ENCODE measurements at regions of chr17 and their contacts with region 1.

Region 1: GRCh38 chr17:50200457-50201275 is 765 bp downstream of the COL1A1 start:
- DNase-seq: no peak
- H3K4me3 ChIP-seq: peak overlapping the region; percentile 100
- CTCF ChIP-seq: peak; percentile 80

Region 2: DNA sequence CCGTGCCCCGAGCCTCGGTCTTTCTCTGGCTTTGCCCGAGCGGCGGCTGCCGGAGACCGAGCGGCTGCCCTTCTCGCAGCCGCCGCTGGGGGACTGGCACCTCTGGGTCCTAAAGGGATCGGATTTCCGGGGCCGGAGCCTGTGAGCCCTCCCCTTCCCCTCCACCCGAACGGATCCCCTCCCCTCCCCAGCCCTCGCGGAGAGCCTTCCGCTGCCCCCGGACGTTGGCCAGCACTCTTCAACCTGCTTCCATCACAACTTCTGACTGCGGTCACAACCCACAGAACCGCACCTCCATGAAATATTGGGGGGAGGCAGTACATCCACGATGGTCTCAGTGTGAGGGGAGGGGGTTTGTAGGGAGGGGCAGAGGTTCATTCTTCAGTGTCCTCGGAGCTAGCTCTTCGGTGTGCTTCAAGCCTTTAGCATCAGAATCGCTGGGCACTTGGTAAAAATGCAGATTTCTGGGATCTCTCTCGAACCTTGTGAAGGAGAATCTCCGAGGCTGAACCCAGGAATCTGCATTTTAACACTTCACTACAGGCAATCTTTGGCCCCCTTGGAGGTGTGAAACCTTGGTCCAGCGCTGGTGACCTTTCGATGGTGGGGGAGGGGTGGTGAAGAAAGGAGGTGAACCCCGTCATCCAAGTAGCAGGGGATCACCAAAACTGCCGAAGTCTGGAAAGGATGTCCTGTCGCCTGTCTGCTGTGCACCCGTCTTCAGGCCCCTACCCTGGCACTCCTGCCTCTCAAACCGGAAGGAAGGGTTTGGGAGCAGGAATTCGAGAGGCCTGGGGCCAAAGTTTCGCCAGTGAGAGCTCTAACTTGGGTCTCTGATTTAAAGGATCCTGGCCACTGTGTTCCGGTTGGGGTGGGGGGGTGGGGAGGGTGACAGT is 49.4 kb before region 1 on chr17:
- CTCF ChIA-PET with region 1: no interaction called
- POLR2A ChIA-PET with region 1: interaction called, 25 read pairs
- DNase-seq: no peak
- H3K4me3 ChIP-seq: peak overlapping the region; percentile 77
- CTCF ChIP-seq: peak; percentile 81

Region 3: DNA sequence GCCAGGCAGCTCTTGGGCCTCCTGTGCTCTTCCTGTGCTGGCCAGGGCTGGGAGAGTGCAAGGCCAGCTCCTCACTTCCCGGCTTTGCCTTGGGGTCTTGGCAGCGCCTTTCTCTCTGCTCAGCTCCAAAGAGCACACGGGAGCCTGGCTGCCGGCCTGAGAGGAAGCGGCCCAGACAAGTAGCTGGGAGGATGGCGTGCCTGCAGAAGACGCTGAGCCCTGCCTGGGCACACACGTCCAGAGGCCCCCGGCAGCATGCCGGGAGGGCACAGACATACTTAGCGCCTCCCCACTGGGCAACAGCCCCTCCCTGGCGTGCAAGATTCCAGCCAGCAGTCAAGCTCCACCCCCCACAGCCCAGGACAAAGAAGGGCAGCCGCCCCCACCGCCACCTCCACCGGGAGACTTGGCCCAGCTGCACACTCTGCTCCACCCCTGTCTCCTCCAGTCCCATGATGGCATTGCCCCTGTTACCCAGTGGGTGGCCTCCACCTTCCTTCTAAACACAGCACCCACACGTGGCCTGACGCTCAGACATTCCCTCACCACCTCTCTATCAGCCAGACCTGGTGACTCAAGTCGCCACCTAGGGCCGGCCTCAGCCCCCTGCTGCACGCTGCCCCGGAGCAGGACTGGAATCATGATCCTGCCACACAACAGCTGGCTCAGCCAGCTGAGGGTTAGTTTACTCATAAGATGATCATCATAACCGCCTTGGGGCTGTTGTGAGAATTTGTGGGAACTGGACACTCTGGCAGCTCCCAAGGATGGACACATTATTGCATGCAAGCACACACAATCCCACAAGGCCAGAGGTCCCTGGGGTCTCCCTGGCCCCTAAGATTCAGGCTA is 22.5 kb before region 1 on chr17:
- CTCF ChIA-PET with region 1: interaction called, 4 read pairs
- POLR2A ChIA-PET with region 1: interaction called, 1,416 read pairs
- DNase-seq: no peak
- H3K4me3 ChIP-seq: no peak overlapping the region
- CTCF ChIP-seq: peak; percentile 71

Region 4: DNA sequence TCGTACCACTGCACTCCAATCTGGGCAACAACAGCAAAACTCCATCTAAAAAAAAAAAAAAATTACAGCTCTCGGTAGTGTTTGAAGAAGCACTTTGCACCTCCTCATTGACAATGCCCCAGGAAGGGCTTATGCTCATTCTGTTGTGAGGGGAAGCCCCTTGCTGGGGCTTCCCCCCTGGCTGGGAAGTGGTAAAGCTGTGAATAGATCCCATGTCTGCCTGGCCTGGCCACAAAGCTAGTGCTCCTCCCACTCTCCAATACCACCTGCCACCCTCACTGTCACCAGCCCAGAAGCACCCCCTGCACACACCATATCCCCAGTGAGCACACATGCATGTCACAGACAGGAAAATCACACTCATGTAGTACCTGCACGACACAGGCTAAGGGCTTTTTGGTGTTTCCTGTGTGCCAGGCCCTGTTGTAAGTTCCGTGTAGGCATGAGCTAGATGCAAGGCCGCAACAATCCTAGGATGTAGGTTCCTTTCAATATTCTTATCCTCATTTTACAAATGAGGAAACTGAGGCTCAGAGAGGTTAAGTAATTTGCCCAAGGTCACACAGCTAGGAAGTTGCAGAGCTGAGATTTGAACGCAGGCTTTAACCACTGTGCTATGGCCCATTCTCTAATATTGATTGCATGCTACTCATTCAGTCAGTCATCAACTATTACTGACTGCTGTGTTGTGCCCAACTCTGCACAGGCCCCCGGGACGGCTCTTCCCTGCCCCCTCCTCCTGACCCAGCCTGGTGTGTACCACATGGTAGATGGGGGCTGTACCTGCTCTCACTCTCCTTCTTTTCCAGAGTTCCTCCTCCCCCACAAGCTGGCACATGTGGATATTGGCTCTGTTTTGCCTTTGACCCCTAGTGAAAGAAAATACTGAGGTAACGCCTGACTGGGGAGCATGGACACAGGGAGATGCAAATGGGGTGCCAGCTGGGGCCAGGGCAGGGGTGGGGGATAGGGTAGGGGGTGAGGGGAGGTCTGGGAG is 12.7 kb after region 1 on chr17:
- CTCF ChIA-PET with region 1: interaction called, 41 read pairs
- POLR2A ChIA-PET with region 1: interaction called, 1,416 read pairs
- DNase-seq: no peak
- H3K4me3 ChIP-seq: no peak overlapping the region
- CTCF ChIP-seq: no peak

Region 5: DNA sequence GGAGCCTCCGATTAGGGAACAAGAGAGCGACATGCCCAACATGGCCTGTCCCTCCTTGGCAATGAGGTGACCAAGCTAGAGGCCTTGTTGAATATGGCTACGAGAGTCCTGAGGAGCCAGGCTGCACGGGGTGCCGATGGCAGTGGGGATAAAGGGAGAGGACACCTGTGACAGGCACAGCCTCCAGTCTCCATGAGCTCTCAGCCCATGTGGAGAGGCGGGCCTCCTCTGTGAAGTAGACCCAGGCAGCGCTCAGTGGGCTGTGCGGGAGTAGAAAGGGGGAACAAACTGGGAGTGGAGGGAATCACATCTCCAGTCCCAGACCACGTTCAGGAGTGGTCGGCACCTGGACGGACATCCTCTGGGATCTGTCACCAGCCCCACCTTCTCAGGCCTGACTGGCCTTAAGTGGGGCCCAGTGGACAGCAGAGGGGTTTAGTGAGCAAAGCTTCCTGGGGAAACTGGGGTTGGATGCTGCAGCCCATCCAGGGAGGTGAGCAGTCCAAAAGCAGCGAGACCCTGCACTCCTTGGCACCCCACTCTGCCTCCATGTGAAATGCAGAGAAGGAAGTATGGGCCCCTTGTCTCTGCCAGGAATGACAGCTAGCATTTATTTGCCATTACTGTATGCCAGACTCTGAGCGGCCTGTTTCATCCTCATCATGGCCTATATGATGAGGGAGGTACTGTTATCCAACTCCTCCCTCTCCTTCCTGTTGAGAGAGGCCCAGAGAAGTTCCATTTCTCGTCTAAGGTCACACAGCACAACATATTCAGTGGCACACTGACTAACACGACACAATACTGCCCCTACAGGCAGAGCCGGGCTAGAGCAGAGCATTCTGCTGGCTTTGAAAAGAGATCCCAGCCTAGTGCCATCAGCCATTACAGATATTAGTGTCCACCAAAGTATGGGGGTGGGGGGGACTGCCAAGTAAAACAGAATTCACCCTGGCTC is 69.1 kb after region 1 on chr17:
- CTCF ChIA-PET with region 1: interaction called, 489 read pairs
- POLR2A ChIA-PET with region 1: interaction called, 2,316 read pairs
- DNase-seq: no peak
- H3K4me3 ChIP-seq: peak overlapping the region; percentile 53
- CTCF ChIP-seq: peak; percentile 80

Measured in AG04449 (cell line).